Activated T-helper 2 cell treated with anti-CD3 and anti-CD28 coated beads, Interferon-gamma antibody, Interleukin-2, Interleukin-4, amounts not matched to agents 10 μg/mL and 5 μg/mL and 100 μg/mL, durations not matched to agents 14 hours and 24 hours and 36 hours (primary cell): ENCODE measurements at regions of chr19 and their contacts with region 1.

Region 1: DNA sequence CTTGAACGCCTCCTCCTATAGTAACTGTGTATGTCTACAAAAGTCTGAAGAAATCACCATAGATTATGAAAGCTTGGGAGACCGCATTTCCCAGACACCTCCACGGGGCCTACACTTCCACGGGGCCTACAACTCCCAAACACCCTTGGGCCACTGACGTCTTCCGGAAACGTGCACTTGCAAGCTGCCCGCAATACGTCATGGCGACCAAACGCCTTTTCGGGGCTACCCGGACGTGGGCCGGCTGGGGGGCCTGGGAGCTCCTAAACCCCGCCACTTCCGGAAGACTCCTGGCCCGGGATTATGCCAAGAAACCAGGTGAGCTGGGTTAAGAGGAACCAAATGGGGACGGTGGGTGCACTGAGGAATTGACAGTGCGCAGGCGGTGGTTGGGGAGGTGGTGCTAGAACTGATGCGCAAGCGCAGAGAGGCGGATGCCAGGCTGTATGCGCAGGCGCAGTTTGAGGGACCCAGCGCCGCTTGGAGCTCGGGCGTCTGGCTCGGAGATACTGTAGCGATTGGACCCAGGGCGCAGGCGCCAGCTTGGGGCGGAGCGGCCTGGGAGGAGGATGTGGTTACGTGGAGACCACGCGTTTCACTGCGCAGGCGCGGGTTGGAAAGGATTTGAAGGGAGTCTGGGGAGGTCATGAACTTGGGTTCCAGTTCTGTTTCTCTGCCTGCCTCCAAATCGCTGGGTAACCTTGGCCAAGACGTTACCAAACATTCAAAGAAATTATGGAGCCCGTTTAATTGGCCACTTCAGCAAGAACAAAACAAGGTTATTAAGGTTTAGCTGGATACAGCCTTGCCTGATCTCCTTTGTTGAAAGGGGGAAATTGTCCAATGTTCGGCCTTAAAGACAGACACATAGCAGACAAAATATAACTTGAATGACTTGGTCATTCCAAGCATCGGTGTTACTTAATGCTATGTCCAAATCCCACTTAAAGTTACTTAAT is at the start of gene MRPL54:
- DNase-seq: peak; percentile 100
- H3K4me3 Mint-ChIP-seq: peak within 1 kb of the TSS; percentile 100
- H3K27ac Mint-ChIP-seq: peak within 1 kb of the TSS; percentile 99
- H3K4me1 Mint-ChIP-seq: peaks cover 16% of the 10 kb centered on the region
- H3K27me3 Mint-ChIP-seq: no peaks in the 10 kb centered on the region
- total RNA-seq, gene MRPL54: 98.0 and 99.6 TPM in 2 replicates

Region 2: GRCh38 chr19:3185482-3186376 is 577.1 kb before region 1 on chr19 and contains the start of gene NCLN:
- intact Hi-C with region 1: loop called (anchors 5 kb)
- DNase-seq: peak; percentile 92
- H3K4me3 Mint-ChIP-seq: peak within 1 kb of the TSS; percentile 89
- H3K27ac Mint-ChIP-seq: peak within 1 kb of the TSS; percentile 90
- H3K4me1 Mint-ChIP-seq: peaks cover 38% of the 10 kb centered on the region
- H3K27me3 Mint-ChIP-seq: no peaks in the 10 kb centered on the region
- total RNA-seq, gene NCLN: 86.3 and 88.1 TPM in 2 replicates

Region 3: GRCh38 chr19:3809881-3810707 is 47.3 kb after region 1 on chr19:
- intact Hi-C with region 1: loop called (anchors 2 kb)
- DNase-seq: no peak
- H3K4me3 Mint-ChIP-seq: no peak overlapping the region
- H3K27ac Mint-ChIP-seq: no peak overlapping the region
- H3K4me1 Mint-ChIP-seq: peaks cover 29% of the 10 kb centered on the region
- H3K27me3 Mint-ChIP-seq: no peaks in the 10 kb centered on the region

Region 4: DNA sequence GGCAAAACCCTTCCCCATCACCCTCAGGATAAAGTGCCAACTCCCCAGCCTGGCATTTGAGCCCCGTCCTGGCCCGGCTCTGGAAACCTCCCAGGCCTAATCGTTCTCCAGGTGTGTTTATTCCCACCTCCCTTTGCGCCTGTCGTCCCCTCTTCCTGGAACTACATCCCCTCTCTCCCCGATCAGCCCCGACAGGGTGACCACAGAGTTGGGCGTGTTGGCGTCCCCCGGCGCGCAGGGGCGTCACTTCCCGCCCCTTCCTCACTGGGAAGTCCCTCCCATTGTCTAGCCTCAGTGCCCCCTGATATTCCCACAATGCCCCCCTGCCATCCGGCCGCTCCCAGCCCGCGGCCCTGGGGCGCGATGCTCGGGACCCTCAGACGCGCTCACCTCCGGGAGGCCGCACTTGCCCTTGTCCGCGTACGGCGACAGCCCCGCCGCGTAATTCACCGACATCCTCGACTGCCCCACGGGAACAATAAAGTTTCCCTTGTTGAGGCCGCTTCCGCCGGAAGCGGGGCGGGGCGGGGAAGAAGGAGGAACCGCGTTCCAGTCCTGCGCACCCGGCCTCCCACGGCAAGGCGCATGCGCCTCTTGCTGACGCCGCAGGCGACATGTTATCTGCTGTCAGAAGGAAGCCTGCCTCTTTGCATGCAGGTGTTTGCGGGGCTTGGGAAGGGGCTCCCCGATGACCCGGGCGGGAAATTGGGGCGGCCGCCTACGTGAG is 419.5 kb after region 1 on chr19 and contains the starts of genes ANKRD24 and SIRT6:
- intact Hi-C with region 1: loop called (anchors 10 kb)
- DNase-seq: peak; percentile 96
- H3K4me3 Mint-ChIP-seq: peak within 1 kb of the TSS; percentile 99
- H3K27ac Mint-ChIP-seq: peak within 1 kb of the TSS; percentile 92
- H3K4me1 Mint-ChIP-seq: peaks cover 14% of the 10 kb centered on the region
- H3K27me3 Mint-ChIP-seq: no peaks in the 10 kb centered on the region
- total RNA-seq, gene ANKRD24: 0.30 and 0.50 TPM in 2 replicates
- total RNA-seq, gene SIRT6: 34.6 and 42.4 TPM in 2 replicates